Activated CD4-positive, alpha-beta T cell treated with anti-CD3 and anti-CD28 coated beads for 36 hours (primary cell): ENCODE measurements at regions of chr21 and their contacts with region 1.

Region 1: DNA sequence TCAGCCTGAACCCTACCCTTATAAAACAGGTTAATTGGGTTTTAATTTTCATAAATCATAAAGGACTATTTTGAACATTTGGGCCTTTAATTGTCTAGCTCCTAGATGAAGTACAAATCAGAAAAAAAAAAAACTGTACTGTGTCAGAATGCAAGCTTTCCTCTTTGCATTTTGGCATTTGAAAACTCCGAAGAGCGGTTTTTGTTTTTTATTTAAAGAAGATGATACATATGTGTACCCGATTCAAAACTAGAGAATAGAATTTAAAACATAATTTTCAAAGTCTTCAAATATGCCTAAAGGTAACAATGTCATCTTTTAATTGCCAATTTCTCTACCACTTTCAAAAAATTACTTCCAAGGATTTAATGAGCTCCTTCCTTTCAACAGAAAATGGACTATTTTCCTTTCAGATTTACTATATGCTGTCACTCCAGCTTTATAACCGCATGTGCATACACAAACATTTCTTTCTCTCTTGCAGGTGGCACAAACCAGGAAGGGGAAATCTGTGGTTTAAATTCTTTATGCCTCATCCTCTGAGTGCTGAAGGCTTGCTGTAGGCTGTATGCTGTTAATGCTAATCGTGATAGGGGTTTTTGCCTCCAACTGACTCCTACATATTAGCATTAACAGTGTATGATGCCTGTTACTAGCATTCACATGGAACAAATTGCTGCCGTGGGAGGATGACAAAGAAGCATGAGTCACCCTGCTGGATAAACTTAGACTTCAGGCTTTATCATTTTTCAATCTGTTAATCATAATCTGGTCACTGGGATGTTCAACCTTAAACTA is 33.7 kb downstream of the MRPL39 start:
- DNase-seq: peak; percentile 83
- ATAC-seq: peak; percentile 34
- H3K4me3 Mint-ChIP-seq: peak overlapping the region; percentile 93
- H3K27ac Mint-ChIP-seq: peak overlapping the region; percentile 96
- H3K4me1 Mint-ChIP-seq: peaks cover 72% of the 10 kb centered on the region
- H3K27me3 Mint-ChIP-seq: no peaks in the 10 kb centered on the region

Region 2: DNA sequence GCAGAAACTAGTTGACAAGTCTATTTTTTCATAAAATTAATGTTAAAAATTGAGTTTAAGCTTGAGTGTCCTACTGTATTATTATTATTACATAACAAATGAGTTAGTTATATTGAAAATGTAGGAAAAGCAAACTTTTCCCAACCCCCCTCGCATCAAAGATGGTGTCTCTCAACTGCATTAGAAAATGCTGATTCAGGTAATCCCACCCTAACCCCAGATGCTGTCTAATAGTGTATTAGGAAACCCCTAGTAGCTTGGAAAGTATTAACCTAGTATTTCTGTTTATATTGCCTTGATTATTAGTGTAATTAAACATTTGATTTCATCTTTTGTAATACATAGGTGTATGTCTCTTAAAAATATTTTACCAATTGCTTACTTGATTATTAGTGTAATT is 1086.6 kb before region 1 on chr21:
- CTCF ChIA-PET with region 1: no interaction called
- POLR2A ChIA-PET with region 1: no interaction called
- intact Hi-C with region 1: no loop called
- DNase-seq: no peak
- ATAC-seq: no peak
- H3K4me3 Mint-ChIP-seq: no peak overlapping the region
- H3K27ac Mint-ChIP-seq: no peak overlapping the region
- H3K4me1 Mint-ChIP-seq: no peaks in the 10 kb centered on the region
- H3K27me3 Mint-ChIP-seq: no peaks in the 10 kb centered on the region

Region 3: DNA sequence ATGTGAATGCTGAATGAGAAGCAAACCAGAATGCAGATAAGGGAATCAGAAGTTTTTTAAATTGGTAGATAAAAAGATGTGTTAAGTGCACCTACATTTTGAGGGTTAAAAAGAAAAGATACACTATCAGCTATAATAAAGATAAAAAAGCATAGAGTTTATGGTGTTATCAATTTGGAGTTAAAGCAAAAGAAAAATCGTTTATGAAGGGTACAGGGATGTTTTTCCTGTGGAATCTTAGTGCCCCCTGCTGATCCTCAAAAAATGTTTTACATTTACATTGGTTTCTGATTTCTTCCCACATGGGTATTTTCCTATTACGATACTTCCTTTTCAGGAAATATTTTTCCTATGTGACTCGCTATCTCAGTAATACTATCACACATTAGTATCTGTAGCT is 259.8 kb before region 1 on chr21:
- CTCF ChIA-PET with region 1: no interaction called
- POLR2A ChIA-PET with region 1: no interaction called
- intact Hi-C with region 1: no loop called
- DNase-seq: no peak
- ATAC-seq: no peak
- H3K4me3 Mint-ChIP-seq: no peak overlapping the region
- H3K27ac Mint-ChIP-seq: no peak overlapping the region
- H3K4me1 Mint-ChIP-seq: no peaks in the 10 kb centered on the region
- H3K27me3 Mint-ChIP-seq: peaks cover 2% of the 10 kb centered on the region

Region 4: GRCh38 chr21:25350056-25350455 is 223.6 kb before region 1 on chr21:
- CTCF ChIA-PET with region 1: no interaction called
- POLR2A ChIA-PET with region 1: no interaction called
- intact Hi-C with region 1: loop called in 1 of 2 experiments (anchors 5 kb)
- DNase-seq: peak; percentile 75
- ATAC-seq: peak; percentile 77
- H3K4me3 Mint-ChIP-seq: no peak overlapping the region
- H3K27ac Mint-ChIP-seq: no peak overlapping the region
- H3K4me1 Mint-ChIP-seq: peaks cover 7% of the 10 kb centered on the region
- H3K27me3 Mint-ChIP-seq: peaks cover 27% of the 10 kb centered on the region

Region 5: DNA sequence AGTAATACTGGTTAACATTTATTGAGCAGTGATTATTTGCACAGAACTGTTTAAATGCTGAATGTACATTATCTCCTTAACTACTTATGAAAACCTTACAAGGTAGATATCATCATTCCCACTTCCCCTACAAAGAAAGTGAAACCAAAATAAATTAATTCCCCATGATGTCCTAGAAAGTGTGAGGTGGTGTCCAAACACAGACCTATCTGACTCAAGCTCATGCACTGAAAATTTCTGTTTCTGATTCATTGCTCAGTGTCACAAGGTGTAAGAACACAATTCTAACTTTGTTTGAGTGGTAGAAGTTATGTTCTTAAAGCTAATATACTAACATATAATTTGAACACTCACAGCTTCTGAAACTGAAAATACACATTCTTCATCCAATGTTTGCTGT is 145.1 kb before region 1 on chr21:
- CTCF ChIA-PET with region 1: interaction called, 14 read pairs
- POLR2A ChIA-PET with region 1: interaction called, 8 read pairs
- intact Hi-C with region 1: loop called in 1 of 2 experiments (anchors 2 kb)
- DNase-seq: no peak
- ATAC-seq: peak; percentile 93
- H3K4me3 Mint-ChIP-seq: peak overlapping the region; percentile 32
- H3K27ac Mint-ChIP-seq: peak overlapping the region; percentile 45
- H3K4me1 Mint-ChIP-seq: peaks cover 52% of the 10 kb centered on the region
- H3K27me3 Mint-ChIP-seq: no peaks in the 10 kb centered on the region

Region 6: DNA sequence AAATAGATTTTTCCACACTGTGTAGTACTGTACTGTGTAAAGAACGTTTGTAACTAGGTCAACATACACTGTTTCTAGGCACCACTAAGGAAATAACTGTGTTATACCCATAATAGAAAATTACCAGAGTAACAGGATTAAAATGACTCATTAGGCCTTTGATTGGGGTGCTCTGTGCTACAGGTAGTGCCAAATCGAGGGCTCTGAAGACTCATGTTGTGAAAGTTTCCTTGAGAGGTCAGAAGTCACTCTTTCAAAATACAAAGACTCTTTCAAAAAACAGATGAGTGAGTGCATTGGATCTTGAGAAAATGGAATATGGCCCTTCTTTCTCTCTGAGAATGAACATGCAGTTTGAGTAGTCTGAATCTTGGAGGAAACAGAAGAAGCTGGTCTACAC is 109.3 kb before region 1 on chr21:
- CTCF ChIA-PET with region 1: interaction called, 3 read pairs
- POLR2A ChIA-PET with region 1: interaction called, 5 read pairs
- intact Hi-C with region 1: loop called in 1 of 2 experiments (anchors 1 kb)
- DNase-seq: peak; percentile 43
- ATAC-seq: peak; percentile 77
- H3K4me3 Mint-ChIP-seq: peak overlapping the region; percentile 45
- H3K27ac Mint-ChIP-seq: peak overlapping the region; percentile 95
- H3K4me1 Mint-ChIP-seq: peaks cover 77% of the 10 kb centered on the region
- H3K27me3 Mint-ChIP-seq: no peaks in the 10 kb centered on the region

Region 7: DNA sequence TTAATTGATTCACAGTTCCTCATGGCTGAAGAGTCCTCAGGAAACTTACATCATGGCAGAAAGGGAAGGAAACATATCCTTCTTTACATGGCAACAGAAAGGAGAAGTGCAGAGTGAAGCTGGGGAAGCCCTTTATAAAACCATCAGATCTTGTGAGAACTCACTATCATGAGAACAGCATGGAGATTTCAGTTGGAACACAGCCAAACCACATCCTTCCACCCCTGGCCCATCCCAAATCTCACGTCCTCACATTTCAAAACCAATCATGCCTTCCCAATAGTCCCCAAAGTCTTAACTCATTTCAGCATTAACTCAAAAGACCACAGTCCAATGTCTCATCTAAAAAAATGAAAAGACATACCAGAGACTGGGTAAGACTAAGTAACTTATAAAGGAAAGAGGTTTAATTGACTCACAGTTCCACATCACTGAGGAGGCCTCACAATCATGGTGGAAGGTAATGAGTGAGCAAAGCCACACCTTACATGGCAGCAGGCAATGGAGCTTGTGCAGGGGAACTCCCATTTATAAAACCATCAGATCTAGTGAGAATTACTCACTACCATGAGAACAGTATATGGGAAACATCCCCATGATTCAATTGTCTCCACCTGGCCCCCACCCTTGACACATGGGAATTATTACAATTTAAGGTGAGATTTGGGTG is 71.5 kb before region 1 on chr21:
- CTCF ChIA-PET with region 1: interaction called, 4 read pairs
- POLR2A ChIA-PET with region 1: interaction called, 11 read pairs
- intact Hi-C with region 1: loop called (anchors 1 kb)
- DNase-seq: peak; percentile 83
- ATAC-seq: peak; percentile 87
- H3K4me3 Mint-ChIP-seq: peak overlapping the region; percentile 57
- H3K27ac Mint-ChIP-seq: peak overlapping the region; percentile 99
- H3K4me1 Mint-ChIP-seq: peaks cover 80% of the 10 kb centered on the region
- H3K27me3 Mint-ChIP-seq: no peaks in the 10 kb centered on the region

Region 8: DNA sequence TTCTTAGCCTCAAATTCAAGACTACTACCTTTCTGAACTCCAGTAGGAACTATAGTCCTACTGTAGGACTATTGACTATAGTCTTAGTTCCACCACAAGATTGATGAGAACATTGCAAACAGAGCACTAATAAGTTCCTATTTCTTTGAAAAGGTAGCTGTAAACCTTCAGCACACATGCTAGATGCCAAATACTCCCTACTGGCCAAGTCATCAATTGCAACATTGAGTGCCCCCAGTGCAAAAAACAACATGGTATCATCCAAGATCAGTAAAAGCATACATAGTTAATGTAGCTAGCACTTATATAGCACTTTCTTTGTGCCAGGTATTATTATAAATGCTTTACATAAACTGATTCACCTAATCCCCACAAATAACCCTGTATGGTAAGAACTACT is 66.1 kb before region 1 on chr21:
- CTCF ChIA-PET with region 1: interaction called, 4 read pairs
- POLR2A ChIA-PET with region 1: interaction called, 11 read pairs
- intact Hi-C with region 1: loop called (anchors 1 kb)
- DNase-seq: peak; percentile 42
- ATAC-seq: peak; percentile 37
- H3K4me3 Mint-ChIP-seq: peak overlapping the region; percentile 66
- H3K27ac Mint-ChIP-seq: peak overlapping the region; percentile 86
- H3K4me1 Mint-ChIP-seq: peaks cover 75% of the 10 kb centered on the region
- H3K27me3 Mint-ChIP-seq: no peaks in the 10 kb centered on the region

Region 9: DNA sequence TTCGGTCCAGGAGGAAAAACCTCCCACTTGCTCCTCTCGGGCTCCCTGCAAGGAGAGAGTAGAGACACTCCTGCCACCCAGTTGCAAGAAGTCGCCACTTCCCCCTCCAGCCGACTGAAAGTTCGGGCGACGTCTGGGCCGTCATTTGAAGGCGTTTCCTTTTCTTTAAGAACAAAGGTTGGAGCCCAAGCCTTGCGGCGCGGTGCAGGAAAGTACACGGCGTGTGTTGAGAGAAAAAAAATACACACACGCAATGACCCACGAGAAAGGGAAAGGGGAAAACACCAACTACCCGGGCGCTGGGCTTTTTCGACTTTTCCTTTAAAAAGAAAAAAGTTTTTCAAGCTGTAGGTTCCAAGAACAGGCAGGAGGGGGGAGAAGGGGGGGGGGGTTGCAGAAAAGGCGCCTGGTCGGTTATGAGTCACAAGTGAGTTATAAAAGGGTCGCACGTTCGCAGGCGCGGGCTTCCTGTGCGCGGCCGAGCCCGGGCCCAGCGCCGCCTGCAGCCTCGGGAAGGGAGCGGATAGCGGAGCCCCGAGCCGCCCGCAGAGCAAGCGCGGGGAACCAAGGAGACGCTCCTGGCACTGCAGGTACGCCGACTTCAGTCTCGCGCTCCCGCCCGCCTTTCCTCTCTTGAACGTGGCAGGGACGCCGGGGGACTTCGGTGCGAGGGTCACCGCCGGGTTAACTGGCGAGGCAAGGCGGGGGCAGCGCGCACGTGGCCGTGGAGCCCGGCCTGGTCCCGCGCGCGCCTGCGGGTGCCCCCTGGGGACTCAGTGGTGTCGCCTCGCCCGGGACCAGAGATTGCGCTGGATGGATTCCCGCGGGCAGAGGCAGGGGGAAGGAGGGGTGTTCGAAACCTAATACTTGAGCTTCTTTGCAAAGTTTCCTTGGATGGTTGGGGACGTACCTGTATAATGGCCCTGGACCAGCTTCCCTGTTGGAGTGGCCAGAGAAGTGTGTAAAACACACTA is 11.7 kb before region 1 on chr21:
- CTCF ChIA-PET with region 1: interaction called, 4 read pairs
- POLR2A ChIA-PET with region 1: interaction called, 55 read pairs
- intact Hi-C with region 1: loop called (anchors 1 kb)
- DNase-seq: peak; percentile 90
- ATAC-seq: peak; percentile 69
- H3K4me3 Mint-ChIP-seq: peak overlapping the region; percentile 93
- H3K27ac Mint-ChIP-seq: peak overlapping the region; percentile 100
- H3K4me1 Mint-ChIP-seq: peaks cover 43% of the 10 kb centered on the region
- H3K27me3 Mint-ChIP-seq: no peaks in the 10 kb centered on the region

Region 10: DNA sequence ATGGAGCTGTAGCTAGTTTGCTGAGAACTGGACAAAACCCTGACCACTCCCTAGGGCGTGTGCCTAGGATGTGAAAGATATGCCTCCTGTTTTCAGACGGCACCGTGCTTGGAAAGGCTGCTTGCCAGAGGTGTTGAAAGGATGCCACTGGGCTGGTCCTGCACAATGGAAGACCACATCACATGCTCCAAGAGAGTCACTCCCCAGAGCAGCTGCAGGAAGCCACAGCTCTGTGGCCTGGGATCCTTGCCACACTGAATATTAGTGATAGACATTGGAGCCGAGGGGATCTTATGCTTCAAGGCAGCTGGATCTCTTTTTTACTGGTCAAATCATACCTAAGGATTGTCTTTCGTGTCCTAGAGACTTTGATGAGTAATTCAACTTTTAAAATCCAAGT is 603.6 kb after region 1 on chr21:
- CTCF ChIA-PET with region 1: no interaction called
- POLR2A ChIA-PET with region 1: no interaction called
- intact Hi-C with region 1: no loop called
- DNase-seq: no peak
- ATAC-seq: no peak
- H3K4me3 Mint-ChIP-seq: no peak overlapping the region
- H3K27ac Mint-ChIP-seq: no peak overlapping the region
- H3K4me1 Mint-ChIP-seq: no peaks in the 10 kb centered on the region
- H3K27me3 Mint-ChIP-seq: peaks cover 3% of the 10 kb centered on the region